CD4-positive, alpha-beta T cell (primary cell): ENCODE measurements at regions of chr1 and their contacts with region 1.

Region 1: DNA sequence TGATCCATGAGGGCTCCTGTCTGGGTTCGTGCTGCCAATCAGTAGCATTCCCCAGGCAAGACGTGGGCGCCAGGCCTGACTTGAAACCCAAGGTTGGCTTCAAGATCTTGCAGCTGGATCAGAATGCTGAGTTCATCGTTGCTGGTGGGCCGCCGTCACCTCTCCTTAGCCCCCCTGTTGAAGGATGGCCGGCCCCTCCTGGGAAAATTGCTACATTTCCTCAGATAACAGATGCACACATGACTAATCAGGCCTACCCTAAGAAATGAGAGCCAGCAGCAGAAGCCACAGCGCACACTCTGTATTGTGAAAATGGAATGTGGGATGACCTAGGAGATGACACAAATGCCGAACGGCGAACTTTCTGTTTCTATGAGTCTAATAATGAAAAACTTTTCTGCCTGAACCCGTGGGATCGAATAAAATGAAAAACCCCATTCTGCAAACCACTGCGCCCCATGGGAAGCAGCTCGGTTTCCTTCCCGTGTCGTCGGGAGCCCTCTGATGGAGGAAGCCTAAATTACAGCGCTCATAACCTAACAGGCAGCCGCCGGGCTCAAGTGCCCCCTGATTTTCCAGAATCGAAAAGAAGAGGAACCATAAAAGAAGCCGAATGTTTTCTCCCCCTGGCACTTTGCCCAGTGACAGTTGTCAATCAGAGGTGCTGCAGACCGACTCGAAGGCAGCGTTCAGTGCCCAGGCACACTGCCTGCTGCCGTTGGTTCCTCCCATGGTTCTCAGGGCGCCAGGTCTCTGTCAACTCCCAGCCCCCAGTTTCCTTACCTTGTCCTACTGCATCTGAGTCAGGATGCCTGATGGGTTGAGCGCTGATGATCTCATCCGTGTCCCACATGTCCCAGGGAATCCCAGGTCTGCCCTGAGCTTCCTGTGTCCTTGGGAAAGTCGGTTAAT is 38.2 kb upstream of the H6PD start:
- DNase-seq: peak; percentile 32 to 75 (median 48)
- ATAC-seq: peak; percentile 51
- H3K4me3 ChIP-seq: no peak overlapping the region
- H3K4me3 Mint-ChIP-seq: no peak overlapping the region
- H3K27ac ChIP-seq: no peak overlapping the region
- H3K27ac Mint-ChIP-seq: no peak overlapping the region
- H3K4me1 ChIP-seq: peaks cover 11% of the 10 kb centered on the region
- H3K4me1 Mint-ChIP-seq: peaks cover 13% of the 10 kb centered on the region
- H3K27me3 ChIP-seq: peaks cover 37 to 46% of the 10 kb centered on the region in 2 experiments
- H3K27me3 Mint-ChIP-seq: peaks cover 69% of the 10 kb centered on the region
- CTCF ChIP-seq: peak; percentile 74

Region 2: DNA sequence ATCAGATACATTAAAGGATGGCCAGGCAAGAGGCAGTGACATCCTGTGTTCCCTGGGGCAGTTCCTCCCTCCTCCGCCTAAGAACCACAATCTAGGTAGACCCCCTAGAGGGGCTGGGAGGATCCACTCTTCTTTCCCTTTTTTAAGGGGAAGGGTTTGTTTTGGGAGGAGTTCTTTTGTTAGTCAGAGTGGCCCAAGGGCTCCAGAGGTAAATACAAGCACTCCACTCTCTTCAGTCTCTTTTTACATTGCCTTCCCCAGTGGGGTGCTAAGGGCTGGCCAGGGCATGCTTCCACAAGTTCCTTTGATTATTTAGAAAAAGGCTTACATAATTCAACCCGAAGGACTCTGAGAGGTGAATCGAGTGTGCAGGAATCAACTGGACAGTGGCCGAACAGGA is 285.0 kb before region 1 on chr1:
- CTCF ChIA-PET with region 1: no interaction called
- POLR2A ChIA-PET with region 1: no interaction called
- intact Hi-C with region 1: loop called in 1 of 2 experiments (anchors 5 kb)
- DNase-seq: no peak
- ATAC-seq: no peak
- H3K4me3 ChIP-seq: no peak overlapping the region
- H3K4me3 Mint-ChIP-seq: no peak overlapping the region
- H3K27ac ChIP-seq: no peak overlapping the region
- H3K27ac Mint-ChIP-seq: no peak overlapping the region
- H3K4me1 ChIP-seq: no peaks in the 10 kb centered on the region
- H3K4me1 Mint-ChIP-seq: no peaks in the 10 kb centered on the region
- H3K27me3 ChIP-seq: peaks cover 0 to 6% of the 10 kb centered on the region in 2 experiments
- H3K27me3 Mint-ChIP-seq: no peaks in the 10 kb centered on the region
- CTCF ChIP-seq: no peak

Region 3: DNA sequence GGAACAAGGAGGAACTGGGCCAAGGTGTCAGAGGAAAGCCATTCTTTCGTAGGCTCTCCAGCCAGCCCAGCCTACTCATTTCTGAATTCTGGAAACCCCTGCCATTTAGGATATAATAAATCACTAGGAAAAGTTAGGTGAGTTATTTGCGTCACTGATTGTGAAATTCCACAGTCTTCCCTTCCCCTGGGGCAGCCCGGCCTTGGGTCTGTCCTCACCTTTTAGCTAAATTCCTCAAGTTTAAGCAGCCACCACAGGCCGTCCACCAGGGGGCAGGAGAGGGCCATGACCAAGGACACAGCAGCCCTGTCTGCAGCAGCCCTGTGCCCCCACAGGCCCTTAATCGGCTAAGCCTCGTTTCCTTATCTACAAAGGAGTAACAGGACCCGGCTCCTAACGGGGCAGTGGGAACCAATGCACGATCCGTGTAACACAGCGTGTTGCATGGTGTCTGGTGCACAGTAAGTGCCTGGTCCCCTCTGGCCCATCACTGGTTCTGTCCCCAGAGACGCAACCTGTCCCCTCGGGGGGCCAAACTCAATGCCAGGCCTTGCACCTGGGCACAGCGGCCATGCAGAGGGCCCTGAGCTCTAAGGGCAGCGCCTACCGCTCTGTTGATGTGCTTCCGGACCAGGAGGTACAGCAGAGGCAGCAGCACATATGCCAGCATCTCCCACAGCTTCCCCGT is 85.6 kb before region 1 on chr1:
- CTCF ChIA-PET with region 1: interaction called, 33 read pairs
- POLR2A ChIA-PET with region 1: interaction called, 3 read pairs
- intact Hi-C with region 1: loop called (anchors 1 kb)
- DNase-seq: peak; percentile 76 to 90 (median 82)
- ATAC-seq: peak; percentile 80
- H3K4me3 ChIP-seq: no peak overlapping the region
- H3K4me3 Mint-ChIP-seq: no peak overlapping the region
- H3K27ac ChIP-seq: no peak overlapping the region
- H3K27ac Mint-ChIP-seq: no peak overlapping the region
- H3K4me1 ChIP-seq: peaks cover 6% of the 10 kb centered on the region
- H3K4me1 Mint-ChIP-seq: peaks cover 15% of the 10 kb centered on the region
- H3K27me3 ChIP-seq: no peaks in the 10 kb centered on the region
- H3K27me3 Mint-ChIP-seq: no peaks in the 10 kb centered on the region
- CTCF ChIP-seq: peak; percentile 95

Region 4: DNA sequence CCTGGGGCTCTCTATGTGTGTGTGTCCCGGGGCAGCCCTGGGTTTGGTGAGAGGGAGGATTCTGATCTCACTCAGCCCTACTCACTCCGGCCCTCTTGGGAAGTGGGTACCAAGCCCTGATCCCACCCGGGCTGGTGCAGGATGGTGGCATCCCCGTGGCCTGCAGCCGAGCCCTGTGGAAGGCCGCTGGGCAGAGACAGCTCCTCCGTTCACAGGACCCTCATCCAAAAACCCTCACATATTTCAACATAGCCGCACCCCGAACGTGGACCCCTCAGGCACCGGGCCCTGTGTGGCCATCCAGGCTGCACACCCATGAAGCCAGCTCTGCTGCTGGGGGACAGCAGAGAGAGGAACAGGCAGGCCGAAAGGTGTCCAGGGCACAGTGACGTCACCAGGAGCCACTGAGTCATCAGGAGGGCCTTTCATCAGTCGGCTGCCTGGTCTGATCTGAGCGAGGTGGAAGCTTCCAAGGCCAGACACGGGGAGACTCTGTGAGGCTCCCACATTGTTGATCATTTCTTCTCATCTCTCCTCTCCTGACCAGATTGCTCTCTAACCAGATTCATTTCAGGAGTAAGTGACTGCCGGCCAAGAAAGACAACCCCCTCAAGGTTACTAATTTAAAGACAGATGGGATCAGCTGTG is 51.2 kb before region 1 on chr1:
- CTCF ChIA-PET with region 1: interaction called, 4 read pairs
- POLR2A ChIA-PET with region 1: no interaction called
- intact Hi-C with region 1: loop called in 1 of 2 experiments (anchors 2 kb)
- DNase-seq: peak in 2 of 14 experiments; percentile 12 to 27
- ATAC-seq: no peak
- H3K4me3 ChIP-seq: no peak overlapping the region
- H3K4me3 Mint-ChIP-seq: no peak overlapping the region
- H3K27ac ChIP-seq: no peak overlapping the region
- H3K27ac Mint-ChIP-seq: no peak overlapping the region
- H3K4me1 ChIP-seq: peaks cover 4% of the 10 kb centered on the region
- H3K4me1 Mint-ChIP-seq: peaks cover 4% of the 10 kb centered on the region
- H3K27me3 ChIP-seq: no peaks in the 10 kb centered on the region
- H3K27me3 Mint-ChIP-seq: no peaks in the 10 kb centered on the region
- CTCF ChIP-seq: no peak

Region 5: GRCh38 chr1:9166289-9167235 is 29.8 kb before region 1 on chr1:
- CTCF ChIA-PET with region 1: no interaction called
- POLR2A ChIA-PET with region 1: no interaction called
- intact Hi-C with region 1: no loop called
- DNase-seq: no peak
- ATAC-seq: no peak
- H3K4me3 ChIP-seq: no peak overlapping the region
- H3K4me3 Mint-ChIP-seq: no peak overlapping the region
- H3K27ac ChIP-seq: no peak overlapping the region
- H3K27ac Mint-ChIP-seq: no peak overlapping the region
- H3K4me1 ChIP-seq: peaks cover 3% of the 10 kb centered on the region
- H3K4me1 Mint-ChIP-seq: no peaks in the 10 kb centered on the region
- H3K27me3 ChIP-seq: no peaks in the 10 kb centered on the region
- H3K27me3 Mint-ChIP-seq: no peaks in the 10 kb centered on the region
- CTCF ChIP-seq: no peak

Region 6: GRCh38 chr1:9228609-9229008 is 32.2 kb after region 1 on chr1:
- CTCF ChIA-PET with region 1: no interaction called
- POLR2A ChIA-PET with region 1: no interaction called
- intact Hi-C with region 1: no loop called
- DNase-seq: no peak
- ATAC-seq: no peak
- H3K4me3 ChIP-seq: no peak overlapping the region
- H3K4me3 Mint-ChIP-seq: no peak overlapping the region
- H3K27ac ChIP-seq: no peak overlapping the region
- H3K27ac Mint-ChIP-seq: no peak overlapping the region
- H3K4me1 ChIP-seq: peaks cover 5% of the 10 kb centered on the region
- H3K4me1 Mint-ChIP-seq: no peaks in the 10 kb centered on the region
- H3K27me3 ChIP-seq: no peaks in the 10 kb centered on the region
- H3K27me3 Mint-ChIP-seq: no peaks in the 10 kb centered on the region
- CTCF ChIP-seq: no peak